ENCODE measurements at regions of chr14 and their contacts with region 1.

Region 1: GRCh38 chr14:68312884-68313610 is 479.8 kb downstream of the ZFP36L1 start:
- DNase-seq: no peak
- ATAC-seq: no peak
- H3K4me3 ChIP-seq: no peak overlapping the region
- H3K27ac ChIP-seq: no peak overlapping the region
- H3K4me1 ChIP-seq: peaks cover 0 to 23% (median 1%) of the 10 kb centered on the region in 12 donors
- H3K27me3 ChIP-seq: no peaks in the 10 kb centered on the region
- CTCF ChIP-seq: no peak
- POLR2A ChIP-seq: no peak

Region 2: GRCh38 chr14:68268197-68268596 is 44.9 kb before region 1 on chr14:
- intact Hi-C with region 1: loop called in 1 of 10 experiments (anchors 5 kb)
- DNase-seq: no peak
- ATAC-seq: peak in 3 of 4 donors; percentile 39 to 60 (median 52)
- H3K4me3 ChIP-seq: no peak overlapping the region
- H3K27ac ChIP-seq: peak overlapping the region in 6 of 12 donors; percentile 37 to 89 (median 47)
- H3K4me1 ChIP-seq: peaks cover 0 to 84% (median 6%) of the 10 kb centered on the region in 12 donors
- H3K27me3 ChIP-seq: no peaks in the 10 kb centered on the region
- CTCF ChIP-seq: no peak
- POLR2A ChIP-seq: no peak